ENCODE measurements at regions of chr6 and their contacts with region 1.

Region 1: DNA sequence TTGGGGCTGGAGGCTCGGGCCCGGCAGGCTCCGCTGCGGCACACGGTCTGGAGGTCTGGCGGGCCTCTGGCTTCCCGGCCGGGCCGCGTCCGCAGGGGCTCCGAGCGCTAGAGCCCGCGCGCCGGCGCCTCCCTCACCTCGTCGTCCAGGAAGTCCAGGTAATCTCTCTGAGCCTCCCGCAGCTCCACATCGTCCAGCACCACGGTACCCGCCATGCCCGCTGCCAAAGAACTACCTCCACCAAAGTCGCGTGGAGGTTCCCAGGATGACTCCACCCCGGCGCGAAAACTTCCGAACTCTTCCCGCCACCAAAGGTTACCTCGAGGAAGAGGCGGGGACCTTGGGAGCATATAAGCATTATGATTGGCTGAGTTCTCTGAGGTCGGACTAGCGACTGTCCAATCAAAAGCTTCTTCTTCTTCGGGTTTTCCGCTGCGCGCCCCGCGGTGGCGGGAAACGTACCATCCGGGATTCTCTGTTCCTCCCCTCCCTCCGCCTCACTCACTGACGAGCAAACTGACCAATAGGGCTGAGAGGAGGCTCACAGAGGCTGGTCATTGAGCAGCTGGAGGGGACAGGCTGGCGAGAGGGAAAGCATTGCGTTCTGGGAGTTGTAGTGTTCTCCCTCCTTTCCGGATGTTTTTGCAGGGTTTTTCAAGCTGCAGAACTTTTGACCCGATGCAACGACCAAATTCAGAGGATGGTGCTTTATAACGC is at the start of gene MCM3:
- DNase-seq: peak; percentile 89 to 99 (median 94)
- ATAC-seq: peak; percentile 95
- H3K4me3 ChIP-seq: peak within 1 kb of the TSS; percentile 67 to 74
- H3K4me3 Mint-ChIP-seq: peak within 1 kb of the TSS; percentile 50
- H3K27ac ChIP-seq: peak within 1 kb of the TSS; percentile 56 to 63
- H3K27ac Mint-ChIP-seq: peak within 1 kb of the TSS; percentile 63
- H3K4me1 ChIP-seq: peaks cover 36% of the 10 kb centered on the region
- H3K4me1 Mint-ChIP-seq: peaks cover 44% of the 10 kb centered on the region
- H3K27me3 ChIP-seq: no peaks in the 10 kb centered on the region
- H3K27me3 Mint-ChIP-seq: no peaks in the 10 kb centered on the region
- CTCF ChIP-seq: no peak
- total RNA-seq, gene MCM3: 6.2 to 6.8 TPM

Region 2: DNA sequence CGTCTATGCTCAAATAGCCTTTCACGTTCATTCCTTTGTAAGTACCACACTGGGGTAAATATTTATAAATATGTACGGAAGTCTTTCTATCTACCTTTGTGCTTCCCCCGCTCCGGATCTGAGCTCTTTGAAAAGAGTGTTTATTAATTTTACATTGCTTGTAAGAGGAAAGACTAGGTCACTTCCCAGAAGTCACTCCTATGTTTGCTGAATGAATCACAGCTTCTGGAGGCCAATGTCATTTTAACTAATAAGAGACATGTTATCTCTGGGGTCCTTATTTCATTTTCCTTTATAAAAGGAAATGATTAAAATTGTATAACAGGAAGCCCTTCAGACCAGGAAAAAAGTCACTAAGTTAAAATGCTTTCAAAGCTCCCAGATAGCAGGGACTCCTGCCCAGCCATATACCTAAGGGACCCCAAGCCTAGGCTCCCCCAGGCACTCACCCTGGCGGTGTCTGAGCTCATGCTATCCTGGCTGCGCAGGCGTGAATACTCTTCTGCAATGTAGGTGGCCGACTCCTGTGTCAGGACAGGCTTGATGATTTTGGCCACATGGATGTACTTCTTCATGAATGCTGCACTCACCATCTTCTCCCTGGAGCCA is 12.7 kb before region 1 on chr6:
- CTCF ChIA-PET with region 1: interaction called, 10 read pairs
- POLR2A ChIA-PET with region 1: no interaction called
- intact Hi-C with region 1: no loop called
- DNase-seq: no peak
- ATAC-seq: no peak
- H3K4me3 ChIP-seq: no peak overlapping the region
- H3K4me3 Mint-ChIP-seq: no peak overlapping the region
- H3K27ac ChIP-seq: no peak overlapping the region
- H3K27ac Mint-ChIP-seq: no peak overlapping the region
- H3K4me1 ChIP-seq: no peaks in the 10 kb centered on the region
- H3K4me1 Mint-ChIP-seq: no peaks in the 10 kb centered on the region
- H3K27me3 ChIP-seq: no peaks in the 10 kb centered on the region
- H3K27me3 Mint-ChIP-seq: no peaks in the 10 kb centered on the region
- CTCF ChIP-seq: no peak

Region 3: DNA sequence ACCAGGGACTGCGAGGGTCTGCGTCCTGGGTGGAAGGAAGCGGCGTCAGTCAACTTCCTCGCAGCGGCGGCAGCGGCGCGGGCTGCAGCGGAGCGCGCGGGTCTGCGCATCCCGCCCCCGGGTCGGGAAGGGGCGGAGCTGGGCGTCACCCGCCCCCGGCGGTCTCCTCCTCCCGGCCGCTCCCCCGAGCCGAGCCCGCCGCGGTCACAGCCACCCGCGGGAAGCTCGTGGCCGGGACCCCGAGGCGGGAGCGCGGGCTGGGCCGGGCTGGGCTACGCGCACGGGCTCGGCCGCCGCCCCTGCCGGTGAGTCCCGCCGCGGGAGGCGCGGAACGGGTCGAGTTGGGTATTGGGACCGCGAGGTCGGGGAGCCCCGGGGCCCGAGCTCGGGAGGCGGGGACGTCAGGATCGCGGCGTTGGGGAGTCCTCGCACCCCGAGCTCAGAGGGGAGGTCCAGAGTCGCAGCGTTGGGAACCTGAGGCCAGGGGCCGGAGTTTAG is 77.4 kb after region 1 on chr6 and contains the start of gene PAQR8:
- CTCF ChIA-PET with region 1: interaction called, 81 read pairs
- POLR2A ChIA-PET with region 1: interaction called, 55 read pairs
- intact Hi-C with region 1: loop called (anchors 1 kb)
- DNase-seq: peak; percentile 62 to 93 (median 80)
- ATAC-seq: peak; percentile 88
- H3K4me3 ChIP-seq: peak within 1 kb of the TSS; percentile 94 to 99
- H3K4me3 Mint-ChIP-seq: peak within 1 kb of the TSS; percentile 99
- H3K27ac ChIP-seq: peak within 1 kb of the TSS; percentile 72 to 86
- H3K27ac Mint-ChIP-seq: peak within 1 kb of the TSS; percentile 96
- H3K4me1 ChIP-seq: peaks cover 35% of the 10 kb centered on the region
- H3K4me1 Mint-ChIP-seq: peaks cover 44% of the 10 kb centered on the region
- H3K27me3 ChIP-seq: no peaks in the 10 kb centered on the region
- H3K27me3 Mint-ChIP-seq: no peaks in the 10 kb centered on the region
- CTCF ChIP-seq: no peak
- total RNA-seq, gene PAQR8: 1.8 to 2.2 TPM

Region 4: DNA sequence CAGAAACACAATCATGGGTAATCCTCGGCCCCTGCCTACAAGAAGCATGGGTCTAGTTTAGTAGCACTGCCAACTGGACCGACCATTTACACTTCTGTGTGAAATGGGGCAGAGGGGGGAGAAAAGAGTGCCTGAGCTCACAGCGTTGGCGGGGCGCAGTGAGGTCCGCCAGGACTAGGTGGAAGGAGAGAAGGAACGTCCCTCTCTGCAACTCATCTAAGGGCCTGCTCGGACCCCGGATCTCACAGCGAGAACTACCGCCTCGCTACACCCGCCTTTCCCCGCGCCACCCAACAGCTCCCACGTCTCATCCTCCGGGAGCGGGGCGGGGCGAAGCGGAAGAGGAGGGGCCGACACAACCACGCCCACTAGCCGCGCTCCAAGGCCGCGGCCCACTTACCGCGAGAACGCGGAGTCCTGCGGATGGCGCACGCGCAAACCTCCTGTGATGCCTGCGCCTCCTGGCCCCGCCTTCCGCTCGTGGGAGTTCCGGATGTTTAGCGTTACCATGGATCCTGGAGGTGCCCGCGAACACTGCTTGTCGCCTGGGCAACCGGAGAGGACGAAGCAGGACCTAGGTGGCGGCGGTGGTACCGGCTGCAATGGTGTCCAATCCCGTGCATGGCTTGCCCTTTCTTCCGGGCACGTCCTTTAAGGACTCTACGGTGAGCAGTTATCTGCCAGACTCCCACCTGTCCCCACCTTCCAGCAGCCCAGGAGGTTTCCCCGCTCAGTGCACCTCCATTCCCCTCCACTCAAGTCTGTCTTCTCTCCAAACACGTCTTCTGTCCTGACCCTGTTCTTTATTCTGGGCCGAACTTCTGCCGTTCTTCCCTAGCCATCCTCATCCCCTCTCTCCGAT is 135.4 kb after region 1 on chr6 and contains the start of gene EFHC1:
- CTCF ChIA-PET with region 1: interaction called, 38 read pairs
- POLR2A ChIA-PET with region 1: interaction called, 14 read pairs
- intact Hi-C with region 1: loop called (anchors 1 kb)
- DNase-seq: peak; percentile 96 to 99 (median 98)
- ATAC-seq: peak; percentile 91
- H3K4me3 ChIP-seq: peak within 1 kb of the TSS; percentile 73 to 81
- H3K4me3 Mint-ChIP-seq: no peak within 1 kb of the TSS
- H3K27ac ChIP-seq: peak within 1 kb of the TSS; percentile 70 to 87
- H3K27ac Mint-ChIP-seq: peak within 1 kb of the TSS; percentile 69
- H3K4me1 ChIP-seq: peaks cover 19% of the 10 kb centered on the region
- H3K4me1 Mint-ChIP-seq: peaks cover 24% of the 10 kb centered on the region
- H3K27me3 ChIP-seq: no peaks in the 10 kb centered on the region
- H3K27me3 Mint-ChIP-seq: no peaks in the 10 kb centered on the region
- CTCF ChIP-seq: no peak
- total RNA-seq, gene EFHC1: 5.1 to 6.9 TPM

Region 5: DNA sequence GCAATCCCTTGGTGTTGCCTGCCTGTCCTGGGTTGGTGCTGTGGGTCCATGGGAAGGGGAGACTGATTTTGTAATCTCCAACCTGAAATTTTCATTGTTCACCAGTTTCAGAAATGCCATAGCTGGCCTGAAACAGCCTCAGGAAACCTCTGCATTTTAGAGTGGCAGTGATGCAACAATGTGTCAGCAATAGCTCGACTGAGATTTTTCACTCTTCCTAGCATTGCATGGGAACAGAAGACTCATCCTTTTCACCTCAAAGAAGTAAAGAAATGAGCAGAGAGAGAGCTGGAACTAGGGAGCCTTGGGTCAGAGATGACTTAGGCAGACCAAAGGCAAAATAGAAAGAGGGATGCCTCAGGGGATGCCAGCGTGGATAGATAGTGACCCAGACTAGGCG is 362.6 kb after region 1 on chr6:
- CTCF ChIA-PET with region 1: interaction called, 11 read pairs
- POLR2A ChIA-PET with region 1: no interaction called
- intact Hi-C with region 1: no loop called
- DNase-seq: no peak
- ATAC-seq: no peak
- H3K4me3 ChIP-seq: no peak overlapping the region
- H3K4me3 Mint-ChIP-seq: no peak overlapping the region
- H3K27ac ChIP-seq: no peak overlapping the region
- H3K27ac Mint-ChIP-seq: no peak overlapping the region
- H3K4me1 ChIP-seq: no peaks in the 10 kb centered on the region
- H3K4me1 Mint-ChIP-seq: peaks cover 5% of the 10 kb centered on the region
- H3K27me3 ChIP-seq: no peaks in the 10 kb centered on the region
- H3K27me3 Mint-ChIP-seq: peaks cover 8% of the 10 kb centered on the region
- CTCF ChIP-seq: no peak

Region 6: DNA sequence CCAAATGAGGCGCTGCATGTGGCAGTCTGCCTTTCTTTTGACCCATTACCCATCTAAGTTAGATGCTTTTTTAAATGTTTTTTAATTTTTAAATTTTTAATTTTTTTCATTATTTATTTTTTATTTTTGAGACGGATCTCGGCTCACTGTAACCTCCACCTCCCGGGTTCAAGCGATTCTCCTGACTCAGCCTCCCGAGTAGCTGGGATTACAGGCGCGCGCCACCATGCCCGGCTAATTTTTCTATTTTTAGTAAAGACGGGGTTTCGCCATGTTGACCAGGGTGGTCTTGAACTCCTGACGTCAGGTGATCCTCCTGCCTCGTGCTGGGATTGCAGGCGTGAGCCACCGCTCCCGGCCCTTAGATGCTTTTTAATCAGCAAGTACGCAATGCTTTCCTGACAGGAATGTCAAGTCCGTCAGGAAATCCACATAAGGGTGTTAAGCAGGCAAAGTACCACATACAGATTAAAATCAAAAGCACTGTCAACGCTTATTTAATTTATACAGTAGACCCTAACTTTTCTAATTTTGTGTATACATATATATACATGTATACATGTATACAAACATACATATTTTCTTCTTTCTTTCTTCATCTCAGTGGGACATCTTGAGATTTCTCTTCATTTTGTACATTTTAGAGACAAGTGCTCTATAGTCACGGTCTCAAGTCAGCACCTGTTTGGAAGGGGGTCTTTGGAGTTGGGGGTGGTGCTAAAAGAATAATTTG is 711.5 kb after region 1 on chr6:
- CTCF ChIA-PET with region 1: no interaction called
- POLR2A ChIA-PET with region 1: no interaction called
- intact Hi-C with region 1: loop called (anchors 5 kb)
- DNase-seq: peak in 7 of 9 experiments; percentile 27 to 74 (median 54)
- ATAC-seq: peak; percentile 8
- H3K4me3 ChIP-seq: peak overlapping the region; percentile 41 to 75
- H3K4me3 Mint-ChIP-seq: peak overlapping the region; percentile 94
- H3K27ac ChIP-seq: peak overlapping the region; percentile 57 to 100
- H3K27ac Mint-ChIP-seq: peak overlapping the region; percentile 99
- H3K4me1 ChIP-seq: peaks cover 6% of the 10 kb centered on the region
- H3K4me1 Mint-ChIP-seq: peaks cover 22% of the 10 kb centered on the region
- H3K27me3 ChIP-seq: no peaks in the 10 kb centered on the region
- H3K27me3 Mint-ChIP-seq: peaks cover 7% of the 10 kb centered on the region
- CTCF ChIP-seq: no peak

Region 7: DNA sequence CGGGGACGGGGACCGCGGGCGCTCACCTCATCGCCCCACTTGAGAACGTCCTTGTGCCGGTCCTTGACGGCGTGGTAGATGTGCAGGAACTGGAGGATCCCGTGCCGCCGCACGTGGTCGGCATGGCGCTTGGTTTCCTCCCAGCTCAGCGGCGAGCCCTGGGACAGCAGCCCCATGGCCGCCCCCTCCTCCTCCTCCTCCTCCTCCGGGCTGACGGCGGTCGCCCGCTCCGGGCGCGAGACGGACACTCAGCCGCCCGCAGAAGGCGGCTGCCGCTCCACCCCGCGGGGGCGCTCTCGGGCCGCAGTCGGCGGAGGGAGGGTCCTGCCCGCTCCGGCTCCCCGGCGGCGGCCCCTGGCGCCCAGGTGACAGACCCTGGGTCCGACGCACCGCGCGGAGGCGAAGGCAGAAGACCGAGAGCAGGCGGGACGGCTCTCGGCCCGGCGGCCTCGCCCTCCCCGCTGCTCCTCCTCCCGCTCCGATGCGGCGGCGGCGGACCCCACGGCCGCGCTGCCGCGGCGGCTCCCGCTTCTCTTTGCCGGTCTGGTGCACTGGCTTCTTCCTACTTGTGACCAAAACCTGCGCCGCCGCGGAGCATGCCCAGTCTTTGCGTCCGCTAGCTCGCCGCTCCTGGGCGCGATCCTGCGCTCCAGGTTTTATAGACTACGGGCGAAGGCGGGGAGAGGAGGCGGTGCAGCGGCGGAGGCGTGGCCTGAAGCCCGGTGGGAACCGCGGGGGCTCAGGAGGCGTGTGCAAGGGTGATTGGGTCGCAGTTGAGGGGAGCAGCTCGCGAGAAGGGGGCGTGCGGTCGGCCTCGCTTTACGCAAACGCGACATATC is 1260.1 kb after region 1 on chr6 and contains the start of gene GCLC:
- CTCF ChIA-PET with region 1: no interaction called
- POLR2A ChIA-PET with region 1: no interaction called
- intact Hi-C with region 1: loop called in 1 of 2 experiments (anchors 10 kb)
- DNase-seq: peak; percentile 75 to 95 (median 87)
- ATAC-seq: peak; percentile 67
- H3K4me3 ChIP-seq: peak within 1 kb of the TSS; percentile 69 to 79
- H3K4me3 Mint-ChIP-seq: peak within 1 kb of the TSS; percentile 99
- H3K27ac ChIP-seq: peak within 1 kb of the TSS; percentile 48 to 62
- H3K27ac Mint-ChIP-seq: peak within 1 kb of the TSS; percentile 89
- H3K4me1 ChIP-seq: peaks cover 39% of the 10 kb centered on the region
- H3K4me1 Mint-ChIP-seq: peaks cover 68% of the 10 kb centered on the region
- H3K27me3 ChIP-seq: no peaks in the 10 kb centered on the region
- H3K27me3 Mint-ChIP-seq: no peaks in the 10 kb centered on the region
- CTCF ChIP-seq: peak; percentile 80
- total RNA-seq, gene GCLC: 13.1 to 13.6 TPM